Activated naive CD4-positive, alpha-beta T cell treated with anti-CD3 and anti-CD28 coated beads for 36 hours (primary cell): ENCODE measurements at regions of chr11 and their contacts with region 1.

Region 1: GRCh38 chr11:86511086-86511551 is 136.4 kb downstream of the CCDC81 start:
- DNase-seq: peak; percentile 10
- H3K4me3 Mint-ChIP-seq: no peak overlapping the region
- H3K27ac Mint-ChIP-seq: no peak overlapping the region
- H3K4me1 Mint-ChIP-seq: peaks cover 8% of the 10 kb centered on the region
- H3K27me3 Mint-ChIP-seq: no peaks in the 10 kb centered on the region

Region 2: GRCh38 chr11:86202013-86202336 is 309.1 kb before region 1 on chr11:
- CTCF ChIA-PET with region 1: no interaction called
- intact Hi-C with region 1: loop called (anchors 10 kb)
- DNase-seq: peak; percentile 42
- H3K4me3 Mint-ChIP-seq: no peak overlapping the region
- H3K27ac Mint-ChIP-seq: no peak overlapping the region
- H3K4me1 Mint-ChIP-seq: no peaks in the 10 kb centered on the region
- H3K27me3 Mint-ChIP-seq: no peaks in the 10 kb centered on the region

Region 3: DNA sequence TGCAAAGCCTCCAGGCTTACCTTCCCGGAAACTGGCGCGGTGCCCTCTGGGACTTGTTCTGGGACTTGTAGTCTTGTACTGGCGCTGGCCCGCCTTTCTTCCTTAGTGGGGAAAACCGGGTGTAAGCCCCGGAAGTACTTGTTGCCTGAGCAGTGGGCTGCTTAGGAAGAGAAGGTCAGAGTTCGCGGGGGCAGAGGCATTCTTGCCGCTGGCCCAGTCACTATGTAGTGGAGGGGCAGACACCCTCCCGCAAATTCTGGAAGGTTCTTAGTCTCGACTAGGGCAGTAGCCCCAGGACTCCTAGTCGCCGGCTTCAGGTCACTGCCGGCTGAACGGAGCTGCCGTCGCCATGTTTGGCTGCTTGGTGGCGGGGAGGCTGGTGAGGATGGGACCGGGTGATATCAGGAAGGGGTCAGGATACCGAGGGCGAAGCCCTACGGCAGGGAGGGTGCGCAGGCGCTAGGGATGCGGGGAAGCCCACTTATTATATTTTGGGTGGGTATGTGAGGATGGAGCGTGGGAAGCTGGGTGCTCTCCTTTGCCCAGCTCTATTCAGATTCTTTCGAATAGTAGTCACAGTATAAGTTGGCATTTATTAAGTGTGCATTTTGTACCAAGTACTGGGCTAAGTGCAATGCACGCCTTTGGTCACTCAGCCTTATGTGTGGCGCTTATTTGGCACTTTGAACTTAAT is 208.9 kb before region 1 on chr11 and contains the start of gene HIKESHI:
- CTCF ChIA-PET with region 1: no interaction called
- intact Hi-C with region 1: loop called (anchors 5 kb)
- DNase-seq: peak; percentile 99
- H3K4me3 Mint-ChIP-seq: peak within 1 kb of the TSS; percentile 99
- H3K27ac Mint-ChIP-seq: peak within 1 kb of the TSS; percentile 94
- H3K4me1 Mint-ChIP-seq: peaks cover 26% of the 10 kb centered on the region
- H3K27me3 Mint-ChIP-seq: no peaks in the 10 kb centered on the region
- total RNA-seq, gene HIKESHI: 40.4 to 41.9 TPM

Region 4: DNA sequence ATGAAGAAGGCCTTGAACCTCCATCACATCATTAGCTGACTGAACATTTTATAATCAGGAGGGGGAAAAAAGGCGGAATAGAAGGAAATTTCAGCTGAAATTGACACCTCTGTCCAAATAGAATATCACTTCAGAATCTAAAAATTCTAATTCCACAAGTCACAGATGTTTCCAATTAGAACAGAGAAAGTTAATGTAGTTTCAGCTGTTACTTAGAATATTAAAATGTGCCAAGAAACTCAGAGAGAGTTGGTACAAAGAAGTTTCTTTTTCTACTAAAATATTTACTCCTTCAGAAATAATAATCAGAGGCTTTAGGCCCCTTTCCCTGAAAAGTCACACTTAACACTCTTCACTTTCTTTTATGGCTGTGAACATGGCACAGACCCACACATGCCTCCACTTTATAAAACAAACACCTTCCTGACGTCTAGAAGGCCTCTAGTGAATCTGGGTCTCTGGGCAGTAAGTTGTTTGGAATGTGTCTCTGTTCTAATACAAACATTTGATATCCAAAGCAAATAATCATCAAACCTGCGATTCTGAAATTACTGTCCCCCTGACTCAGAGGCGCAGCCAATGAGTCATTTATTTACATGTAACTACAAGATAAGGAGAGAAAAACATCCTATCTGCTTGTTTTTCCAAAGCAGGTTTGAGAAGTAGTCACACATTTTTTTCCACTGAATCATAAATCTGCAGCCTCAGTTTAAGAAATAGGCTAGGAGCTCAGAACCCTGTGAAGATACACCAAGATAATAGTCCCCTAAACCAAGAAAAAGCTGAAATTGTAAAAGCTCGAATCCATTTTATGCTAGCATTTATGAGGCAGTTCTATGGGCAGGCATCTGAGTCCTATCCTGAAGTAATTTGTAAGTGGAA is 12.9 kb after region 1 on chr11:
- CTCF ChIA-PET with region 1: interaction called, 4 read pairs
- intact Hi-C with region 1: loop called (anchors 2 kb)
- DNase-seq: peak; percentile 23
- H3K4me3 Mint-ChIP-seq: no peak overlapping the region
- H3K27ac Mint-ChIP-seq: peak overlapping the region; percentile 24
- H3K4me1 Mint-ChIP-seq: peaks cover 19% of the 10 kb centered on the region
- H3K27me3 Mint-ChIP-seq: no peaks in the 10 kb centered on the region

Region 5: DNA sequence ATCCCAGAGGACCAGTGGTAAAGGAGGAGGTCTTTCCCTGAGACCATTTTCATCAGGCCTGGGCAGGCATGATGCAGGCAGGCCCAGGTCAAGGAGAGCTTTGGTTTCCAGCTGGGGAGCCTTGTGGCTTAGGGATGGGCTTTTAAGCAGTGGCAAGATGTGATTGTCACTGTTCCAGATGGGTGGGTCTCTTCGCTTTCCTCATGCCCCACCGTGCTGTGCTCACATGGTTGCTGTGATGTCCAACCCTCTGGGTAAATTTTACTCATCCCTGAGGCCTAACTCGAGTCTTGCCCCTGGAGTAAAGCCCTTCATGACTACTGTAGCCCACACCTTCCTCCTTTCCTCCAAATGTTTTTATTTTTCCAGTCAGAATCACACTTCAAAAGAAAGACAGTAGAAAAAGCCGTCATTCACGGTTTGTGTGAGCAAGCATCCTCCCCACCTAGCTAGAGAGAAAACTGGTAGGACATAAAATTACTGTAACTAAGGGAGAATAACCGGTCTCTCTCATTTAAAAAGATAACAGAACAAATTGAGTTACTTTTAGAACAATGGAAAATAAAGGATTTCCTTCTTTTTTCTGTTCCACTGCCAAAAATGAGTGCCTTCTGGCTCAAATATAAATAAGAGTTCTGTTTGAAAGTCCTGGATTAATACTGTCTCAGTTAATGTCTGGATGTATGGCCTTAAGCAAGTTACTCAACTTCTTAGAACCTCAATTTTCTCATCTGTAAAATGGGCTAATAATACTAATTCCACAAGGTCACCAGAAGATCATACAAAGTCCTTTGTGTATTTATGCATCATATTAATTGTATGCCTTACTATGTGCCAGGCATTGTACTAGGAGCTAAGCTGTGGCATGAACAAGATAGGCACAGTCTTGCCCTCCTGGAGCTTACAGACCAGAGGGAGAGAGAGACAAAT is 76.4 kb after region 1 on chr11:
- CTCF ChIA-PET with region 1: no interaction called
- intact Hi-C with region 1: loop called (anchors 1 kb)
- DNase-seq: no peak
- H3K4me3 Mint-ChIP-seq: no peak overlapping the region
- H3K27ac Mint-ChIP-seq: peak overlapping the region; percentile 57
- H3K4me1 Mint-ChIP-seq: peaks cover 41% of the 10 kb centered on the region
- H3K27me3 Mint-ChIP-seq: no peaks in the 10 kb centered on the region

Region 6: GRCh38 chr11:86688398-86689179 is 177.5 kb after region 1 on chr11:
- CTCF ChIA-PET with region 1: no interaction called
- intact Hi-C with region 1: loop called (anchors 2 kb)
- DNase-seq: peak; percentile 70
- H3K4me3 Mint-ChIP-seq: no peak overlapping the region
- H3K27ac Mint-ChIP-seq: peak overlapping the region; percentile 90
- H3K4me1 Mint-ChIP-seq: peaks cover 27% of the 10 kb centered on the region
- H3K27me3 Mint-ChIP-seq: peaks cover 2% of the 10 kb centered on the region